ENCODE measurements at regions of chr2 and their contacts with region 1.

Region 1: GRCh38 chr2:144084114-144084661 is 435.7 kb downstream of the ZEB2 start:
- DNase-seq: peak; percentile 82
- ATAC-seq: peak; percentile 78
- H3K4me3 ChIP-seq: no peak overlapping the region
- H3K27ac ChIP-seq: peak overlapping the region; percentile 85
- H3K4me1 ChIP-seq: peaks cover 59% of the 10 kb centered on the region
- H3K27me3 ChIP-seq: no peaks in the 10 kb centered on the region
- CTCF ChIP-seq: no peak

Region 2: DNA sequence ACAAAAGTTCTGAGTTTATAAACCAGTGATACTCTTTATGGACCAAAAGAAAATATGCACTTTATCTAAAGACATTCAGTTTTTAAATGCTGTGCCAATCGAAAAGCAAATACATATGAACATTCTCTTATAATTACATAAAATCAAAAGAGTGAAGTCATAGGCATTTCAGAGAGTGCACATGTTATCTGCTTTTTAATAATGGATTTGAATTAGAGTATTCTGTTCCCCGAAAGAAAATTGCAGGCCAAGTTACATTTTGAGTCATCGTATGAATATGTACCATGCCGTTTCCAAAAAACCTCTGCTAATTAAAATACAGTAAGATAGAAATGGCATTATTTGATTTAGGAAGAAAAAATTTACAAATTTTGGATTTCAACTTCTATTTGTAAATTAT is 130.0 kb before region 1 on chr2:
- CTCF ChIA-PET with region 1: no interaction called
- POLR2A ChIA-PET with region 1: no interaction called
- intact Hi-C with region 1: loop called (anchors 1 kb)
- DNase-seq: peak; percentile 36
- ATAC-seq: peak; percentile 48
- H3K4me3 ChIP-seq: no peak overlapping the region
- H3K27ac ChIP-seq: no peak overlapping the region
- H3K4me1 ChIP-seq: peaks cover 34% of the 10 kb centered on the region
- H3K27me3 ChIP-seq: no peaks in the 10 kb centered on the region
- CTCF ChIP-seq: no peak

Region 3: DNA sequence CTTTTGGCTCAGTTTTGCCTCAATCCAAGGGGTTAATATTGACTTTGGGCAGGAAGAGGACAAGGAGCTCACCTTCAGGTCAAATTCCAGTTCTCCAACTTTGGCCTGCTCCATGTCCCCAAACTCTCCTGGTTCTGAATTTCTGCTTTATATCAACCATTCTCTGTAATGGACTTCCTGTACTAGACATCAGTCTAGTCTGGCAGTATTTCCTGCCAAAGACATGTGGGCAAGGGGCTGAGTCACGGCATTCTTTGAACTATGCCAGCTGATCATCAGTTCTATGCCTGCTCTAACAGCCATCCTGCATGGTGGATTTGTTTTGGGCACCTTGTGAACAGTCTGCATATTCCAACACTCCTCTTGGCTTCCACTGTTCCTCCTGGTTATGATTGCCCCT is 236.3 kb after region 1 on chr2:
- CTCF ChIA-PET with region 1: no interaction called
- POLR2A ChIA-PET with region 1: no interaction called
- intact Hi-C with region 1: loop called (anchors 10 kb)
- DNase-seq: peak; percentile 78
- ATAC-seq: peak; percentile 80
- H3K4me3 ChIP-seq: no peak overlapping the region
- H3K27ac ChIP-seq: no peak overlapping the region
- H3K4me1 ChIP-seq: peaks cover 28% of the 10 kb centered on the region
- H3K27me3 ChIP-seq: no peaks in the 10 kb centered on the region
- CTCF ChIP-seq: no peak

Region 4: GRCh38 chr2:144361742-144362141 is 277.6 kb after region 1 on chr2:
- CTCF ChIA-PET with region 1: interaction called, 10 read pairs
- POLR2A ChIA-PET with region 1: no interaction called
- intact Hi-C with region 1: no loop called
- DNase-seq: no peak
- ATAC-seq: no peak
- H3K4me3 ChIP-seq: no peak overlapping the region
- H3K27ac ChIP-seq: no peak overlapping the region
- H3K4me1 ChIP-seq: peaks cover 26% of the 10 kb centered on the region
- H3K27me3 ChIP-seq: no peaks in the 10 kb centered on the region
- CTCF ChIP-seq: no peak